ENCODE measurements at regions of chr2 and their contacts with region 1.

Region 1: DNA sequence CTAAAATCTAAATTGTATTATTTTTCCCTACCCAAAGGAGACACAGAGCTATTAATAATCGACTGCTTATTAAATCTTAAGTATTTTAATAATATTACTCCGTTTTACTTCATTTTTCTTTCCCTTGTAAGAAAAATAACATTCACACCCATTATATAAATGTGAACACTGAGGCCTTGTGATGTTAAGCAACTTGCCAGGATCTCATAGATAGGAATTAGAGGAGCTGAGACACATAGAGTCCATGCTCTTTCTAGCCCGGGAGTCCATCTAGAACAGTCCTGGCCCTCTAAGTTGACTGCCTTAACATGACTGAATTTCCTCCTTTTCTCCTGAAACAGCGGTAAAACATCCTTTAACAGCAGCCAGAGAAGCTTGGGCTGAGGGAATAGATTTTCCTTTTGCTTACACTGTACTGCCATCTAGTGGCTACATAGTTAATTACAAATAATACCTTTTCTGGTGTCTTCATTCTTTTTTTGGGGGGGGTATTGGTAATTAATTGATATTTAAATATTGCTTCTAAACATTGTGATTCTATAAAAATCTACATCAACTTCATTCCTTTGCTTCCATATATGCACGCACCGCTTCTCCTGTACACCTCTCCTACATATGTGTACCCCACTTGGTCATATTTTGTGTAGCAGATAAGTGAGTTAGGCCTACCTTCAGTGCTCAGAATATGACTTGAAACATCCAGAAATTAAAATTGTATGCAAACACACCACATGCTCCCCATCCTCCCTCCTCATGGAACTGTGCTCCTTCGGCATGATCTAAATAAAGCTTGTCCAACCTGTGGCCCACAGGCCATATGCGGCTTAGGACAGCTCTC is 125.8 kb upstream of the HNMT start:
- DNase-seq: no peak

Region 2: GRCh38 chr2:135913727-135914365 is 1924.6 kb before region 1 on chr2:
- intact Hi-C with region 1: loop called (anchors 5 kb)
- DNase-seq: no peak

Region 3: GRCh38 chr2:136423516-136423996 is 1414.9 kb before region 1 on chr2:
- intact Hi-C with region 1: loop called (anchors 5 kb)
- DNase-seq: peak; percentile 85

Region 4: GRCh38 chr2:136486115-136486514 is 1352.4 kb before region 1 on chr2:
- intact Hi-C with region 1: no loop called
- DNase-seq: no peak

Region 5: DNA sequence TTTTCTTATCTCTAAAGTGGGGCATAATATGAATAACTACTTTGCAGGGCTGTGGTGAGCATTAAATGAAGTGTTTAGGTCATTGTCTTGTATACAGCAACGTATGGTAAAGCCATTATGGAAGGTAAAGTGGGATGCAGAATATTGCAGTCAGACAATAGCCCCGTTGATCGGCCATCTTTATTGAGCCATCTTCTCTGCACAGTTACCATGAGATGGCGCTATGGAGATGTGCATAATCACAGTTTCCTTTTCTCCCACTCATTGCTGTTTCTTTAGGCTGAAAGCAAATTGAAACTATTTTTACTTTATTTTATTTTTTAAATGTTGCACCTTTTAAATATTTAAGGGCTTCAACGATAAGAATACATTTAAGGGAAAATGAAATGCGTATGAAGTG is 964.2 kb before region 1 on chr2:
- intact Hi-C with region 1: loop called (anchors 10 kb)
- DNase-seq: no peak

Region 6: DNA sequence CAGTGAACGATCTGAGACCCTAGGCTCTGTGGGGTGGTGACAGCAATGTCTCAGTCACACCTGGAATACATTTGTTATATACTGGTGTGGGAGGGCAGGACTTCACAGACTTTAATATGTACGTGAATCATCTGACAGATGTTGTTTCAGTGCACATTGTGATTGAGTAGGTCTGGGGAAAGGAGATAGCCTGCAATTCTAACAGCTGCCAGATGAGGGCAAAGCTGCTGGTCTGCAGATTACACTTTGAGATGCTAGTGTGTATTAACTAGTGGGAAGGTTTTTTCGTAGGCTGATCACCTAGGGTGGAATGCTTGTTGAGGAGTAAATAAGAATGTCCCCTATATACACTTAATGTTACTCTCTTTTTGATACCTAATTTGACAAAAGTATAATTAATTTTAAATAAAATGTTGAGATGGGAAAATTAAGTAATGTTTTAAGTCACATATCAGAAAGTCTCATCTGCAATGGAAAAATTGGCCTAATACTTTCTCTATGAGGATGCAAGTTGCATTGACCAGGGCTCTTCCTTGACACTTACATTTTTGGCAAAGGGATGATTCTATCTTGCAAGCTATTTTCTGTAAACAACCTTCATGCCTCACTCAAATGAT is 371.1 kb before region 1 on chr2:
- intact Hi-C with region 1: loop called (anchors 5 kb)
- DNase-seq: no peak

Region 7: DNA sequence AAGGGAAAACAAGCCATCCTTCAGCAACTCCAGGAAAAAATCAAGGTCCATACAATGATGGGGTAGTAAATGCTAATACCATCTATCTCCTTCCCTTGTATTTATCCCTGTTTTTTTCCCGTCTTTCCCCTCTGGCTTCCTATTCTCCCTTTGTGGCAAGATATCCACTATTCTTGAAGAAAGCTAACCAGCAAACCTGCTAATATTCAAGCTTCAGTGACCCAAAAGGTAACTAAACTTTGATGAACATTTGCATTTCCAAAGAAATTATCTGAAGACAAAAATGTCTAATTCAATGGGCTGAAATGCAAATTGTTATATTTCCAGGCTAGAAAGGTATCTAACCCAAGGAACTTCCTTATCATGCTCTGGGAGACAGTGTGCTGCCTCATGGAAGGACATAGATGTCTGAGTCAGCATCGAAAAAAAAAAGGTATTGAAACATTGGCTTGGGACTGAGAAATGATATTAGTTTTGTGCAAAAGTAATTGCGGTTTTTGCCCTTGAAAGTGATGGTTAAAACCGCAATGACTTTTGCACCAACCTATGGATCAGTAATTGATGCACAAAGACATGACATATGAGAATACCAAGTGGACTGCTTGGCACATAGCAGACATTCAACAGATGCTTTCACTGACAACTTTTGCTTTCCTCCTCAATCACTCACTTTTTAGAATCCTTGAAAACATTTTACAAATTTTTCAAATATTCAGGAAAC is 62.1 kb after region 1 on chr2:
- intact Hi-C with region 1: no loop called
- DNase-seq: no peak

Region 8: GRCh38 chr2:138324068-138324771 is 485.7 kb after region 1 on chr2:
- intact Hi-C with region 1: no loop called
- DNase-seq: no peak

Region 9: DNA sequence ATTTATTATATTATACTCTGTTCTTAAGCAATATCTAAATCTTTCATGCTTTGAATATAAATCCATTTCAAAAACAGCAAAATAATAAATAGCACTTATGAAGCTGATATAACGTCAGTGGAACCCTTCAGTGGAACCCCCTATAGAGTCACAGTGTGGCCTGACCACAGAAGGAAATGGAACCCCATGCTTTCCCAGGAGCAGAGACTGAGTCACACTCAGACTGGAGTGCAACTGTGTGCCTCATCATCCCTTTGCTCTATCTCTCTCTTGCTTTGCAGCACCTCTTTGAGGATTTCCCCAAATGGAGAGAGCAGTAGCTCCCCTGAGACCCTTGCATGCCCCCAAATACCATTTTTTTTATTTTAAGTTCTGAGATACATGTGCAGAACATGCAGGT is 928.6 kb after region 1 on chr2:
- intact Hi-C with region 1: no loop called
- DNase-seq: no peak